ENCODE measurements at regions of chr1 and their contacts with region 1.

Region 1: DNA sequence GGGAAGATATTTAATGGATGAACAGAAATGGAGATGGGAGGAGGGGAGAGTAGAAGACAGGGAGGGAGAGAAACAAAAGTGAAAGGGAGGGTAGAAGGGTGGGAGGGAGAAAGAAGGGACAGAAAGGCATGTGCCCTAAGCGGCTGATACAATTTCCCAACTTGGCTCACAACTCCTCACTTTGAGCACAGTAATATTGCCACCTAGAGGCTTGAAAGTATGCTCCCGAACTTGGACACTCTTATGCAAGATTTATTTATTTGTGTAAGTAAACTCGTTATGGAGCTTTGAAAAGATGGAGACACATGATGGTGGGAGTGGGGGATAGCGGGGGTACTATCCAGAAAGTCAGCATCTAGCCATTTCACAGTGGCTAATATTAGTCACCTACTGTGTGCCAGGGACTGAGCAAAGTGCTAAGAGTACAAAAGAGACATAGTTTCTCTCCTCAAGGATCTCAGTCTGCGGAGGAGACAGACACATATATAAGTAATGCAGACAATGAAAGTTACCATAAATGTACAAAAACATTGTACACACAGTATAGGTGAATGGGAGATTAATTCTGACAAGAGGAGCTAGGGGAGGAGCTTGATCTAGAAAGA is 189.7 kb downstream of the SEC16B start:
- DNase-seq: peak in 6 of 7 donors; percentile 14 to 55 (median 22)
- H3K4me3 ChIP-seq: no peak overlapping the region
- H3K27ac ChIP-seq: no peak overlapping the region
- H3K4me1 ChIP-seq: no peaks in the 10 kb centered on the region
- H3K27me3 ChIP-seq: no peaks in the 10 kb centered on the region
- CTCF ChIP-seq: peak; percentile 34 to 64 (median 56)
- POLR2A ChIP-seq: no peak

Region 2: GRCh38 chr1:176903474-176903873 is 876.7 kb before region 1 on chr1:
- intact Hi-C with region 1: loop called in 1 of 2 experiments (anchors 10 kb)
- DNase-seq: peak in 1 of 7 donors; percentile 18
- H3K4me3 ChIP-seq: peak overlapping the region in 1 of 4 donors; percentile 24
- H3K27ac ChIP-seq: peak overlapping the region in 2 of 5 donors; percentile 35
- H3K4me1 ChIP-seq: peaks cover 14 to 15% of the 10 kb centered on the region in 2 donors
- H3K27me3 ChIP-seq: no peaks in the 10 kb centered on the region
- CTCF ChIP-seq: no peak
- POLR2A ChIP-seq: no peak

Measured in adrenal gland (tissue), 19 donors.